ENCODE measurements at regions of chr17 and their contacts with region 1.

Region 1: GRCh38 chr17:58082870-58083490 is at the start of gene DYNLL2:
- DNase-seq: peak; percentile 79 to 93 (median 87)
- ATAC-seq: peak; percentile 82 to 86 (median 84)
- H3K4me3 ChIP-seq: peak within 1 kb of the TSS; percentile 61 to 86
- H3K4me3 Mint-ChIP-seq: peak within 1 kb of the TSS; percentile 87 to 90 (median 87)
- H3K27ac ChIP-seq: peak within 1 kb of the TSS; percentile 52
- H3K27ac Mint-ChIP-seq: peak within 1 kb of the TSS; percentile 83 to 85
- H3K4me1 ChIP-seq: peaks cover 3 to 35% of the 10 kb centered on the region in 2 experiments
- H3K4me1 Mint-ChIP-seq: peaks cover 31 to 39% (median 36%) of the 10 kb centered on the region in 3 donors
- H3K27me3 ChIP-seq: no peaks in the 10 kb centered on the region
- H3K27me3 Mint-ChIP-seq: no peaks in the 10 kb centered on the region
- total RNA-seq, gene DYNLL2: 30.4 to 42.1 (median 34.9) TPM

Region 2: GRCh38 chr17:57861000-57861789 is 221.8 kb before region 1 on chr17:
- CTCF ChIA-PET with region 1: no interaction called
- POLR2A ChIA-PET with region 1: interaction called in 1 of 2 experiments, 11 read pairs
- DNase-seq: peak in 24 of 35 experiments; percentile 13 to 57 (median 30)
- ATAC-seq: peak; percentile 72 to 83 (median 81)
- H3K4me3 ChIP-seq: peak overlapping the region; percentile 35 to 80
- H3K4me3 Mint-ChIP-seq: peak overlapping the region; percentile 76 to 87 (median 77)
- H3K27ac ChIP-seq: no peak overlapping the region
- H3K27ac Mint-ChIP-seq: peak overlapping the region in 1 of 2 donors; percentile 39
- H3K4me1 ChIP-seq: peaks cover 8 to 20% of the 10 kb centered on the region in 2 experiments
- H3K4me1 Mint-ChIP-seq: peaks cover 10 to 14% (median 11%) of the 10 kb centered on the region in 3 donors
- H3K27me3 ChIP-seq: peaks cover 0 to 51% of the 10 kb centered on the region in 2 experiments
- H3K27me3 Mint-ChIP-seq: peaks cover 6 to 17% of the 10 kb centered on the region in 2 donors

Region 3: DNA sequence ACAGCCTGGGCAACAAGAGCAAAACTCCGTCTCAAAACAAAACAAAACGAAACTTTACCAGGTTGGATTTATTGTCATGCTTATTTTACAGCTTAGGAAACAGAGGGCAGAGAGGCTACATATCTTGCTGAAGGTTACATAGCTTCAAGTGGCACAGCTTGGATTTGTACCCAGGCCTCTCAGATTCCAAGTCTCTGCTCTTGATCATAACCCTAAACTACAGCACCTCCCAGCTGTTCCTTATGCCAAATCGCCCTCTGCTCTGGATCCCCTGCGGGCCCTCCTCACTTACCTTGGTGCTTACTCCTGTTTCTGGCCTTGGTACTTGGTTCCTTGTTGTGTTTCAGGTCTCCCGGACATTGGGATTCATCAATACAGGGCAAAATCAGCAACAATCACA is 116.1 kb before region 1 on chr17:
- CTCF ChIA-PET with region 1: no interaction called
- POLR2A ChIA-PET with region 1: no interaction called
- DNase-seq: no peak
- ATAC-seq: no peak
- H3K4me3 ChIP-seq: no peak overlapping the region
- H3K4me3 Mint-ChIP-seq: no peak overlapping the region
- H3K27ac ChIP-seq: no peak overlapping the region
- H3K27ac Mint-ChIP-seq: no peak overlapping the region
- H3K4me1 ChIP-seq: no peaks in the 10 kb centered on the region
- H3K4me1 Mint-ChIP-seq: no peaks in the 10 kb centered on the region
- H3K27me3 ChIP-seq: peaks cover 0 to 7% of the 10 kb centered on the region in 2 experiments
- H3K27me3 Mint-ChIP-seq: no peaks in the 10 kb centered on the region

Region 4: GRCh38 chr17:58136669-58137283 is 53.8 kb after region 1 on chr17:
- CTCF ChIA-PET with region 1: no interaction called
- POLR2A ChIA-PET with region 1: no interaction called
- DNase-seq: no peak
- ATAC-seq: no peak
- H3K4me3 ChIP-seq: no peak overlapping the region
- H3K4me3 Mint-ChIP-seq: no peak overlapping the region
- H3K27ac ChIP-seq: no peak overlapping the region
- H3K27ac Mint-ChIP-seq: no peak overlapping the region
- H3K4me1 ChIP-seq: no peaks in the 10 kb centered on the region
- H3K4me1 Mint-ChIP-seq: peaks cover 1 to 10% (median 2%) of the 10 kb centered on the region in 3 donors
- H3K27me3 ChIP-seq: peaks cover 3 to 4% of the 10 kb centered on the region in 2 experiments
- H3K27me3 Mint-ChIP-seq: no peaks in the 10 kb centered on the region

Region 5: DNA sequence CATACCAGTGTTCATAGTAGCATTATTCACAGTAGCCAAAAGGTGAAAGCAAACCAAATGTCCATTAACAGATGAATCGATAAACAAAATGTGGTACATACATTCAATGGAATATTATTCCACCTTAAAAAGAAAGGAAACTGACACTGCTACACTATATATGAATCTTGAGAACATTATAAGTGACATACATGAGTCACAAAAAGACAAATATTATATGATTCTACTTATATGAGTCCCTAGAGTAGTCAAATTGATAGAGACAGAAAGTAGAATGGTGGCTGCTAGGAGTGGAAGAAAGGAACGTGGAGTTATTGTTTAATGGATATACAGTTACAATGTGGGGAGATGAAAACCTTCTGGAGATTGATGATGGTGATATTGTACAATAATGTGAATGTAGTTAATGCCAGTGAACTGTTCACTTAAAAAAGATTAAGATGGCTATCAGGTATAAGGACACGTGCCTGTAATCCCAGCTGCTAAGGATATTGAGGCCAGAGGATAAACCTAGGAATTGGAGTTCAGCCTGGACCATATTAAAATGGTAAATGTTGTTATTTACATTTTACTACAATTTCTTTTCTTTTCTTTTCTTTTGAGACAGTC is 1043.9 kb after region 1 on chr17:
- CTCF ChIA-PET with region 1: no interaction called
- POLR2A ChIA-PET with region 1: interaction called in 1 of 2 experiments, 13 read pairs
- DNase-seq: no peak
- ATAC-seq: no peak
- H3K4me3 ChIP-seq: no peak overlapping the region
- H3K4me3 Mint-ChIP-seq: no peak overlapping the region
- H3K27ac ChIP-seq: no peak overlapping the region
- H3K27ac Mint-ChIP-seq: no peak overlapping the region
- H3K4me1 ChIP-seq: no peaks in the 10 kb centered on the region
- H3K4me1 Mint-ChIP-seq: peaks cover 0 to 5% (median 0%) of the 10 kb centered on the region in 3 donors
- H3K27me3 ChIP-seq: no peaks in the 10 kb centered on the region
- H3K27me3 Mint-ChIP-seq: no peaks in the 10 kb centered on the region

Measured in T-cell (primary cell).